Astrocyte of the cerebellum (primary cell): ENCODE measurements at regions of chr20 and their contacts with region 1.

Region 1: DNA sequence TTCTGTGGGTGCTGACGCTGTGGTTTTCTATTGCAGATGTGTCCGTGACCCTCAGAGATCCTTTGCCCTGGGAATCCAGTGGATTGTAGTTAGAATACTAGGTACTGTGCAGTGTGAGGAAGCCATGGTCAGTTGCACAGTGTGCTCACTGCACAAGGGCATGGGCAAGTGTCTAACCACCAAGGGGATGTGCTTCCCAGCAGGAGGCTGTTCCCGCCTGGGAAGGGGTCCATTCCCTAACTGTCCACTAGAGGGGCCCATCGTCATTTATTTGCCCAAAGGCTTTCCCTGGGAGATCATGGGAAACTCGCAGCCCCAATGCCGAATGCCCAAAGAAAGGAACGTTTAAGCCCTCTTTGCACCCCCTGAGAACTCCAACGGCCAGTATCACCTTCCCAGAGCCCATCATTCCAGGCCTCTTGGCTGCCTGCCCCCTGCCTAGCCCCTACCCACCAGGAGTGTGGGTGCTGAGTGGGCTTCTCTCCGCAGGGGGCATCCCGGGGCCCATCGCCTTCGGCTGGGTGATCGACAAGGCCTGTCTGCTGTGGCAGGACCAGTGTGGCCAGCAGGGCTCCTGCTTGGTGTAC is 26.2 kb downstream of the SLCO4A1 start:
- DNase-seq: peak; percentile 57
- H3K4me3 ChIP-seq: no peak overlapping the region
- CTCF ChIP-seq: peak; percentile 87

Region 2: GRCh38 chr20:62627901-62628612 is 40.5 kb before region 1 on chr20:
- in situ Hi-C with region 1: no loop called
- DNase-seq: peak; percentile 13
- H3K4me3 ChIP-seq: no peak overlapping the region
- CTCF ChIP-seq: no peak

Region 3: GRCh38 chr20:62707921-62708521 is 39.5 kb after region 1 on chr20:
- in situ Hi-C with region 1: loop called (anchors 5 kb)
- DNase-seq: no peak
- H3K4me3 ChIP-seq: no peak overlapping the region
- CTCF ChIP-seq: peak; percentile 42

Region 4: GRCh38 chr20:62752671-62753501 is 84.4 kb after region 1 on chr20:
- in situ Hi-C with region 1: no loop called
- DNase-seq: no peak
- H3K4me3 ChIP-seq: no peak overlapping the region
- CTCF ChIP-seq: no peak

Region 5: DNA sequence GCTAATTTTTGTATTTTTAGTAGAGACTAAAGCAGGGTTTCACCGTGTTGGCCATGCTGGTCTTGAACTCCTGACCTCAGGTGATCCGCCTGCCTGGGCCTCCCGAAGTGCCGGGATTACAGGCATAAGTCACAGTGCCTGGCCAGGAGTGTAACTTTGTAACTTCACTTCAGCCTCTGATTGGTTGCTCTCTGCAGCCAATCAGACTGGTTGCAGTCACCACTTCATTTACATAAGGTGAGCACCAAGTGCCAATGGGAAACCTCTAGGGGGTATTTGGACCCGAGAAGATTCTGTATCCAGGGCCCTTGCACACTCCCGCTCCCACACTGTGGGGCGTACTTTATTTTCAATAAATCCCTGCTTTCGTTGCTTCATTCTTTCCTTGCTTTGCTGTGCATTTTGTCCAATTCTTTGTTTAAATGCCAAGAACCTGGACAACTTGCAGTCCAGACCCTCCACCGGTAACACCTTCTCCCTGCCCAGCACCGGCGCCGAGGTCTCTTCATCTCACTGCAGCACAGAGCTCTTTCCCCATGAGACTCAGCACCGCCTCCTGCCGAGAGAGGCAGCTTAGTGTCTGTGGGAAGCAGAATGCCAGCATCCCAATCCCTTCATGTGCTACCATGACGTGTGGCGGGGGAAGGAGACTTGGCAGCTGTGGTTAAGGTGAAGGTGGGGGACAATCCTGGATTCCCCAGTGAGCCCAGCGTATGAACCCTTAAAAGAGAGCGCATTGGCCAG is 113.8 kb after region 1 on chr20:
- in situ Hi-C with region 1: loop called (anchors 10 kb)
- DNase-seq: no peak
- H3K4me3 ChIP-seq: no peak overlapping the region
- CTCF ChIP-seq: peak; percentile 7